Activated CD8-positive, alpha-beta T cell treated with anti-CD3 and anti-CD28 coated beads, Interleukin-2, amount 10 ng/mL, durations not matched to agents 7 days and 5 days (primary cell): ENCODE measurements at regions of chr6 and their contacts with region 1.

Region 1: GRCh38 chr6:108921547-108922361 is 73.5 kb downstream of the ARMC2 start:
- DNase-seq: peak; percentile 64
- ATAC-seq: peak; percentile 83
- H3K4me3 Mint-ChIP-seq: peak overlapping the region; percentile 14
- H3K27ac Mint-ChIP-seq: peak overlapping the region; percentile 54
- H3K4me1 Mint-ChIP-seq: peaks cover 54% of the 10 kb centered on the region
- H3K27me3 Mint-ChIP-seq: peaks cover 28% of the 10 kb centered on the region

Region 2: DNA sequence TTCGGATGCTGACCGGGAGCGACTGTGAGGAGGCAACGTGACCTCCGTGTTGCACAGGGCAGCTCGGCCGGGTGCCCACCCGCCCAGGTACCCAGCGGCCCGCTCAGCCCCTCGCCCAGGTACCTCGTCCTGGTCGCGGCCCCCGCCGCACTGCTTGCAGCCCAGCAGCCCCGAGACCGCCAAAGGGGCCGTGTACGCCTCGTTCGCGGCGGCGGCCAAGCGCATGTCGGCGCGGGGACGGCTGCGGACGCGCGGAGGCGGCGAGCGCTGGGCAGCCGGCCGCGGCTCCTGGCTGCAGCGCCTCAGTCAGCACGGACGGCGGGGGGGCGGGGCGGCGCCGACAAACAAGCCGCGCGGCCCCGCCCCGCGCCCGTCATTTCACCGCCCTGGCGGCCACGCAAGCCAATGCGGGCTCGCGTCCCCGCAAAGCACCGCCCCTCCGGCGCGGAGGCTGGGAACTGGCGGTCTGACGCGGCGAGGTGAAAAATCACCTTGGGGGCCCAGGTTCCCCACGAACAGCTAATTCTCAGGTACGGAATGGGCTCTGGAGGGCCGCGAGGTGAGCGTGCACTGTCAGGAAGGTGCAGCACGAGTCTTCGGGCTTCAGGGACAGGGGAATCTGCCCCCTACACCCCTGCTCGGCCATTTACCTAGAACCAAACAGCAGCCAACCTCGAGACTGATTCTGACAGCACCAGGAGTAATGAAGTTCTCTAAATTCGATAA is 87.6 kb after region 1 on chr6:
- CTCF ChIA-PET with region 1: interaction called, 3 read pairs
- POLR2A ChIA-PET with region 1: interaction called, 12 read pairs
- DNase-seq: peak; percentile 93
- ATAC-seq: peak; percentile 96
- H3K4me3 Mint-ChIP-seq: peak overlapping the region; percentile 92
- H3K27ac Mint-ChIP-seq: peak overlapping the region; percentile 95
- H3K4me1 Mint-ChIP-seq: peaks cover 42% of the 10 kb centered on the region
- H3K27me3 Mint-ChIP-seq: no peaks in the 10 kb centered on the region

Region 3: DNA sequence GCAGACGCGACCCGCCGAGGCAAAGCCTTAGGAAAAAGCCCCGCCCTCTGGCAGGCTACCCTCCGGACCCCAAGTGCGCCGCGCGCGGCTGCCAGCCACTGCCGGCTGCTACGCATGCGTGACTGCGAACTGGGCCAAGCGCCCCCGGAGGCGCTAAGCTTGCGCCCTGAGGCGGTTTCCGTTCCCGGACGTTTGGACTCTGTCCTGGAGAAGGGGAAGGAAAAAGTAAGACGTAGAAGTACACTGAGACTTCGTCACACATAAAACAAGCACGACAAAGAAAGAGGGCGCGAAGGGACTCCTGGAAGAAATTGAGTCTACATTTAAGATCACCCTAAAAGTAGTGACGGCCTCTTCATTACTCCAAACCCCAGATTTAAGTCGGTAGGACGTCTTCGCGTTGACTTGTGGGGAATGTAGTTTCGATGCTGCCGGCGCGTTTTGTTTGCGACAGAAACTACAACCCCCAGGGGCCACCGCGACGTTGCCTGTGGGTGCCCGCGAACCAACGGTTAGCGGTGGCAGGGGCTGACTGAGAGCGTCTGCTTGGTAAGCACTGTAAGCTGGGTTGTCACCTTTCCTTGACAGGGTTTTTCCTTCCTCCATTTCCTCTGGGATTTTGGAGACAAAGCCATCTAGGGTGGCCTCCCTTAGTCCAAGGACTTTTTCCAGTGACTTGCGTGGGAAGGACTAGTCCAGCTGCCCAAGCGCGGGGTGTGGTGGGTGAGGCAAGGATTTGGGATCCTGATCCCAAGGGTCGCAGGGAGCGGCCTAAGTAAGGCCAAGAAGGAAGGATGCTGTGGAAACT is 173.5 kb after region 1 on chr6 and contains the start of gene CEP57L1:
- CTCF ChIA-PET with region 1: no interaction called
- POLR2A ChIA-PET with region 1: interaction called, 10 read pairs
- DNase-seq: peak; percentile 97
- ATAC-seq: peak; percentile 77
- H3K4me3 Mint-ChIP-seq: peak within 1 kb of the TSS; percentile 86
- H3K27ac Mint-ChIP-seq: peak within 1 kb of the TSS; percentile 99
- H3K4me1 Mint-ChIP-seq: peaks cover 50% of the 10 kb centered on the region
- H3K27me3 Mint-ChIP-seq: no peaks in the 10 kb centered on the region
- total RNA-seq, gene CEP57L1: 25.2 to 25.3 TPM

Region 4: GRCh38 chr6:109130065-109130464 is 208.3 kb after region 1 on chr6:
- CTCF ChIA-PET with region 1: no interaction called
- POLR2A ChIA-PET with region 1: no interaction called
- DNase-seq: no peak
- ATAC-seq: no peak
- H3K4me3 Mint-ChIP-seq: no peak overlapping the region
- H3K27ac Mint-ChIP-seq: no peak overlapping the region
- H3K4me1 Mint-ChIP-seq: no peaks in the 10 kb centered on the region
- H3K27me3 Mint-ChIP-seq: no peaks in the 10 kb centered on the region